ENCODE measurements at regions of chr11 and their contacts with region 1.

Region 1: GRCh38 chr11:94171693-94172440 is 43.2 kb downstream of the PANX1 start:
- DNase-seq: no peak
- H3K4me3 ChIP-seq: no peak overlapping the region
- H3K27ac ChIP-seq: no peak overlapping the region
- H3K27me3 ChIP-seq: no peaks in the 10 kb centered on the region
- CTCF ChIP-seq: peak; percentile 89

Region 2: DNA sequence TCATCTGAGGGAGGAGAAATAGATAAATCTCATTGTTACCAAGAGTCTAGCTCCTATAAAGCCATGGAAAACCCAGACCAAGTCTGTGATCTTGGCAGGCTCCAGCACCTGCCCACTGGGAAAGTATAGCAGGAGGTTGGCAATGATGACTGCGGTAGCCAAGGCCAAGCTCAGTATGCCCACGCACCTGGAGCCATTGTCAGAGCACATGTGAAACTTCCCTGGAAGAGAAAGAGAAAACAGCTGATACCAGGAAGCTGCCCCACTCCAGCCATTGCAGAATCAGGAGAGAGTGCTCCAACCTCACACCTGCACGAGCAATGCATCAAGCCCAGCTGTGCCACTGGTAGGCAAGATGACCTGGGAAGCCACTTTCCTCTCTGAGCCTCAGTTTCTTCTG is 212.9 kb before region 1 on chr11:
- CTCF ChIA-PET with region 1: no interaction called
- POLR2A ChIA-PET with region 1: no interaction called
- DNase-seq: no peak
- H3K4me3 ChIP-seq: no peak overlapping the region
- H3K27ac ChIP-seq: no peak overlapping the region
- H3K27me3 ChIP-seq: peaks cover 9% of the 10 kb centered on the region
- CTCF ChIP-seq: no peak

Region 3: GRCh38 chr11:94112206-94112953 is 59.5 kb before region 1 on chr11:
- CTCF ChIA-PET with region 1: no interaction called
- POLR2A ChIA-PET with region 1: no interaction called
- DNase-seq: no peak
- H3K4me3 ChIP-seq: no peak overlapping the region
- H3K27ac ChIP-seq: no peak overlapping the region
- H3K27me3 ChIP-seq: no peaks in the 10 kb centered on the region
- CTCF ChIP-seq: no peak

Region 4: GRCh38 chr11:94152678-94153065 is 19.2 kb before region 1 on chr11:
- CTCF ChIA-PET with region 1: interaction called, 11 read pairs
- POLR2A ChIA-PET with region 1: no interaction called
- DNase-seq: no peak
- H3K4me3 ChIP-seq: no peak overlapping the region
- H3K27ac ChIP-seq: peak overlapping the region; percentile 48
- H3K27me3 ChIP-seq: no peaks in the 10 kb centered on the region
- CTCF ChIP-seq: no peak

Region 5: DNA sequence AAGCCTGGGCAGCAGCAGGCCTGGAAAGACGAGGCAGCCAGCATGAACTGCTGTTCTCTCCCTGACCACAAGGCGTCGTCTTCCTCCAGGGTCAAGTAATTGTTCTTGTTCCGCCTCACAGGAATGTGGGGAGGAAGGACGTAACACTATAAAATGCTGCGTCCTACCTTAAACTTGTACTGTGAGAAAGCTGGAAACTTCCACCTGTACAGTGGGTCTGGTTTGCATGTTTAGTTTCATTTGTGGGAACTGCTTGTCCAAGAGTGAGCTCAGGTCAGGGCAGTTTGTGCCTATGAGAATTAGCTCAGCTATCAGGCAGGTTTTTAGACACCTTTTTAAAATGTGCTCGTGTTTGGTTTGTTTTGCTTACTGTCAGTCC is 12.0 kb after region 1 on chr11:
- CTCF ChIA-PET with region 1: interaction called, 23 read pairs
- POLR2A ChIA-PET with region 1: interaction called, 5 read pairs
- DNase-seq: no peak
- H3K4me3 ChIP-seq: no peak overlapping the region
- H3K27ac ChIP-seq: no peak overlapping the region
- H3K27me3 ChIP-seq: no peaks in the 10 kb centered on the region
- CTCF ChIP-seq: peak; percentile 76

Region 6: DNA sequence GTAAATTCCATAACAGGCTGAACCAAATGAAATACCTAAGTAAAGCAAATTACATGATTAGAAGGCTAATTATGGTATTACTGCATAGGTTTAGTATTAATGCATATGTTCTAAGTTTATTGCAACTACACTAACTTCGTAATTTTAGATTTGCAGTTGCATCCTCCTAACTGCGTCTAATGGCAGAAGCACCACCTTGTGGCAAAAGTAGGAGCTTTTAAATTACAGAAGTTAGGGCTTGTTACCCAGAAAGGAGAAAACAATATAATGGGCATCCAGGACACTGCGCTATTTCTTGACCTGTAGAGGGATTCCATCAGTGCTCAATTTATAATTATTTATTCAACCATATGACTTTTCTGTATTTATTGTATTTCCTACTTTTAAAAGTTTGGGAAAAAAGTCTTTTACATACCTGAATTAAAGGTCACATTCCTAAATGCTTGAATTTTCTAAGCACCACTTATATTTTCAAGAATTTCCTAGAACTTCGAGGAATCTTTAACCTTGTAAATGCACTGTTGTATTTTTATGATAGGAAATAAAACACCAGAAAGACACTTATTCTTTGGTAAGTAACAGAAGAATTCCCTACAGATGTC is 245.6 kb after region 1 on chr11:
- CTCF ChIA-PET with region 1: interaction called, 46 read pairs
- POLR2A ChIA-PET with region 1: no interaction called
- DNase-seq: peak; percentile 38
- H3K4me3 ChIP-seq: no peak overlapping the region
- H3K27ac ChIP-seq: no peak overlapping the region
- H3K27me3 ChIP-seq: no peaks in the 10 kb centered on the region
- CTCF ChIP-seq: peak; percentile 77

Region 7: DNA sequence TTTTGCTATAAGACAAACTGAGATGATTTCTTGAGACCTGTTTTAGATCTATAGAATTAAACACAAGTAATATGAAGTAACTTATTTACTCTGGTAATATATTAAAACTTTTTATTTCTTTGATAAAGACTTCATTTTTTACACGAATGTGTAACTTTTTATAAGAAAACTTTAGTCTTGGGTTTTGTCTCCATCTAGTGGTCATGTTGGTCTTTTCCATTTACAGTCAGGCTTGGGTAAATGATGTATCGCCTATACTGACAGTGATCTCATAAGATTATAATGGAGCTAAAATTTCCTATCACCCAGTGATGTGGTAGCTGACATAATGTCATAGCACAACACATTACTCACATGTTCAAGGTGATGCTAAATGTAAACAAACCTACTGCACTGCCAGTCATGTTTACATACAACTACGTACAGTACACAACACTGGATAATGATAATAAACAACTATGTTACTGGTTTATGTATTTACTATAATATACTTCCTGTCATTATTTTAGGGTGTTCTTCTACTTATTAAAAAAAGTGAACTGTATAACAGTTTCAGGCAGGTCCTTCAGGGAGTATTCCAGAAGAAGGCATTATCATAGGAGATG is 332.9 kb after region 1 on chr11:
- CTCF ChIA-PET with region 1: interaction called, 24 read pairs
- POLR2A ChIA-PET with region 1: no interaction called
- DNase-seq: peak; percentile 34
- H3K4me3 ChIP-seq: no peak overlapping the region
- H3K27ac ChIP-seq: no peak overlapping the region
- H3K27me3 ChIP-seq: no peaks in the 10 kb centered on the region
- CTCF ChIP-seq: peak; percentile 71